CD8-positive, alpha-beta T cell (primary cell): ENCODE measurements at regions of chr4 and their contacts with region 1.

Region 1: GRCh38 chr4:1200425-1201035 is 28.1 kb upstream of the SPON2 start:
- DNase-seq: peak in 6 of 9 experiments; percentile 25 to 71 (median 54)
- ATAC-seq: no peak
- H3K4me3 ChIP-seq: peak overlapping the region; percentile 69 to 90
- H3K4me3 Mint-ChIP-seq: peak overlapping the region; percentile 87
- H3K27ac ChIP-seq: peak overlapping the region; percentile 87 to 91
- H3K27ac Mint-ChIP-seq: peak overlapping the region; percentile 95
- H3K4me1 ChIP-seq: peaks cover 47% of the 10 kb centered on the region
- H3K4me1 Mint-ChIP-seq: peaks cover 53% of the 10 kb centered on the region
- H3K27me3 ChIP-seq: no peaks in the 10 kb centered on the region
- H3K27me3 Mint-ChIP-seq: no peaks in the 10 kb centered on the region
- CTCF ChIP-seq: no peak

Region 2: DNA sequence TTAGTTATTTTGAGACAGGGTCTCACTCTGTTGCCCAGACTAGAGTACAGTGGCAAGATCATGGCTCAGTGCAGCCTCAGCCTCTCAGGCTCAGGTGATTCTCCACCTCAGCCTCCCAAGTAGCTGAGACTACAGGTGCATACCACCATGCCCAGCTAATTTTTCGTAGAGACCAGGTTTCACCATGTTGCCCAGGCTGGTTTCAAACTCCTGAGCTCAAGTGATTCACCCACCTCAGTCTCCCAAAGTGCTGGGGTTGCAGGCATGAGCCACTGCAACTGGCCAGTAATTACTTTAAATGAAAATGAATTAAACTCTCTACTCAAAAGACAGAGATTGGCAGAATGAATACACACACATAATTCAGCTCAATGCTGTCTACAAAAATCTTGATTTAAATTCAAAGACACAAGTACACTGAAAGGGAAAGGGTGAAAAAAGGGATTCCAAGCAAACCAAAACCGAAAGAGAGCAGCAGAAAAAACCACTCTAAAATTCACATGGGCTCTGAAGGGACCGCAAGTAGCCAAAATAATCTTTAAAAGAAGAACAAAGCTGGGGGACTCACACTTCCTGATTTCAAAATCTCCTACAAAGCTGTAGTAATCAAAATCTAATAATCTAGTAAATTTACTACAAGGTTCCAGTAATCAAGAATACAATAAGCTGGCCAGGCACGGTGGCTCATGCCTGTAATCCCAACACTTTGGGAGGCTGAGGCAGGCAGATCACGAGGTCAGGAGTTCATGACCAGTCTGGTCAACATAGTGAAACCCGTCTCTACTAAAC is 16.4 kb before region 1 on chr4:
- CTCF ChIA-PET with region 1: interaction called, 5 read pairs
- POLR2A ChIA-PET with region 1: interaction called, 3 read pairs
- intact Hi-C with region 1: loop called in 1 of 2 experiments (anchors 1 kb)
- DNase-seq: peak in 2 of 9 experiments; percentile 46 to 70
- ATAC-seq: no peak
- H3K4me3 ChIP-seq: peak overlapping the region in 1 of 2 experiments; percentile 13
- H3K4me3 Mint-ChIP-seq: peak overlapping the region; percentile 63
- H3K27ac ChIP-seq: peak overlapping the region in 1 of 2 experiments; percentile 61
- H3K27ac Mint-ChIP-seq: peak overlapping the region; percentile 32
- H3K4me1 ChIP-seq: peaks cover 19% of the 10 kb centered on the region
- H3K4me1 Mint-ChIP-seq: peaks cover 33% of the 10 kb centered on the region
- H3K27me3 ChIP-seq: no peaks in the 10 kb centered on the region
- H3K27me3 Mint-ChIP-seq: no peaks in the 10 kb centered on the region
- CTCF ChIP-seq: no peak

Region 3: GRCh38 chr4:1218634-1219565 is 18.4 kb after region 1 on chr4:
- CTCF ChIA-PET with region 1: interaction called, 4 read pairs
- POLR2A ChIA-PET with region 1: interaction called, 13 read pairs
- intact Hi-C with region 1: loop called (anchors 1 to 2 kb)
- DNase-seq: no peak
- ATAC-seq: no peak
- H3K4me3 ChIP-seq: no peak overlapping the region
- H3K4me3 Mint-ChIP-seq: peak overlapping the region; percentile 18
- H3K27ac ChIP-seq: no peak overlapping the region
- H3K27ac Mint-ChIP-seq: peak overlapping the region; percentile 69
- H3K4me1 ChIP-seq: peaks cover 25% of the 10 kb centered on the region
- H3K4me1 Mint-ChIP-seq: peaks cover 43% of the 10 kb centered on the region
- H3K27me3 ChIP-seq: no peaks in the 10 kb centered on the region
- H3K27me3 Mint-ChIP-seq: no peaks in the 10 kb centered on the region
- CTCF ChIP-seq: no peak

Region 4: DNA sequence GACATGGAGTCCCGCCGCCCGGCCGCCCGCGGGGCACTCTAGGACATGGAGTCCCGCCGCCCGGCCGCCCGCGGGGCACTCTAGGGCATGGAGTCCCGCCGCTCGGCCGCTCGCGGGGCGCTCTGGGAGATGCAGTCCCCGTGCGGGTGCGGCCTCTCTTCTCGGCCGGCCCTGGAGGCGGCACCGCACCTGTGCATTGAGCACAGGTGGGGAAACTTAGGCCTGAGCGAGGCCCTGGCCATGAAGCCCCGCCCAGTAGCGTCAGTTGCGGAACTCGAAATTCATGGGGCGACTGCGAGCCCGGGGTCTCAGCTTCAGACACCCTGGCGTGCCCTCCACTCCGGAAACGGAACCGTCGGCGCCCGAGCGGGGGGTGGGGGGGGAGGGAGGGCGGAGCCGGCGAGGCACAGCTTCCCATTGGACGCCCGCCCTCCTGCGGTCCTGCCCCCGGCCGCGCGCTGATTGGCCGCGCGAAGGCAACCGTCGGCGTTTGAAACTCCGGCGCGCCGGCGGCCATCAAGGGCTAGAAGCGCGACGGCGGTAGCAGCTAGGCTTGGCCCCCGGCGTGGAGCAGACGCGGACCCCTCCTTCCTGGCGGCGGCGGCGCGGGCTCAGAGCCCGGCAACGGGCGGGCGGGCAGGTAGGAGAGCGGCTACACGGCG is 520.6 kb after region 1 on chr4 and contains the starts of genes TACC3 and TMEM129:
- CTCF ChIA-PET with region 1: no interaction called
- POLR2A ChIA-PET with region 1: no interaction called
- intact Hi-C with region 1: loop called in 1 of 2 experiments (anchors 5 kb)
- DNase-seq: peak; percentile 89 to 98 (median 94)
- ATAC-seq: peak; percentile 82
- H3K4me3 ChIP-seq: peak within 1 kb of the TSS; percentile 54 to 74
- H3K4me3 Mint-ChIP-seq: peak within 1 kb of the TSS; percentile 86
- H3K27ac ChIP-seq: peak within 1 kb of the TSS; percentile 85 to 86
- H3K27ac Mint-ChIP-seq: peak within 1 kb of the TSS; percentile 100
- H3K4me1 ChIP-seq: peaks cover 56% of the 10 kb centered on the region
- H3K4me1 Mint-ChIP-seq: peaks cover 49% of the 10 kb centered on the region
- H3K27me3 ChIP-seq: no peaks in the 10 kb centered on the region
- H3K27me3 Mint-ChIP-seq: no peaks in the 10 kb centered on the region
- CTCF ChIP-seq: no peak
- total RNA-seq, gene TACC3: 131 to 137 TPM
- total RNA-seq, gene TMEM129: 14.5 to 14.8 TPM